AG04450 (cell line): ENCODE measurements at regions of chr6 and their contacts with region 1.

Region 1: GRCh38 chr6:33751771-33752645 is 5.3 kb upstream of the IP6K3 start:
- DNase-seq: no peak
- H3K4me3 ChIP-seq: no peak overlapping the region
- H3K27ac ChIP-seq: no peak overlapping the region
- H3K27me3 ChIP-seq: peaks cover 8% of the 10 kb centered on the region
- CTCF ChIP-seq: no peak

Region 2: DNA sequence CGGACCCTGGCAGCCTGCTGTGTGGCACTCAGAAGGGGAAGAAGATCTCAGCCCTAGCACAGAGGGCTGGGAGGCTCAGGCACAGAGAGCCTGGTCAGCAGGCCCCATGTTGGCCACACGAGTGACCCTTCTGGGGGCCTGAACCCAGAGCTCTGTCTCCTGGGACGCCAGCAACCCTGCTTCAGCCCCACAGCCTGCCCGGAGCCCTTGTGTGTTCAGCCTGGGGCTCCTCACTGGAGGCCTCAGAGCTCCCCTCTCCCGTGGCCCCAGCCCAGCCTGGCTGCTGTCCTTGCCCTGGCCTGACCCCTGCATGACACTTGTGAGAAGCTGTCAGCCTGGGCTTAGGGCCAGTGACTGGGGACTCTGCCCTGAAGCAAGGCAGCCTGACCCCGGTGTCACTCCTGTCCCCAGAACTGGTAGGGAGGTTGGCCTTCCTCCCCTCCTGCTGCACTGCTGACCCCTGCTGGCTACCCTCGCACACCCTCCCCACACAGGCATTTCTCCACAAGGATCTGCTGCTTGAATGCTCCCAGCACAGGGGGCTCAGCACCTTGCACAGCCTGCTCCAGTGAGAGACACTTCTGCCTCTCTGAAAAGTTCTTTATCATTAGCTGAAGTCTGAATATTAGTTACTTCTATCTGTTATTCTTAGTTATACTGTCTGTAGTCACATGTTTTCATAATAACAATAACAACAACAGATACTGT is 10.1 kb after region 1 on chr6:
- CTCF ChIA-PET with region 1: interaction called, 11 read pairs
- POLR2A ChIA-PET with region 1: interaction called, 4 read pairs
- DNase-seq: no peak
- H3K4me3 ChIP-seq: no peak overlapping the region
- H3K27ac ChIP-seq: no peak overlapping the region
- H3K27me3 ChIP-seq: peaks cover 7% of the 10 kb centered on the region
- CTCF ChIP-seq: peak; percentile 60

Region 3: DNA sequence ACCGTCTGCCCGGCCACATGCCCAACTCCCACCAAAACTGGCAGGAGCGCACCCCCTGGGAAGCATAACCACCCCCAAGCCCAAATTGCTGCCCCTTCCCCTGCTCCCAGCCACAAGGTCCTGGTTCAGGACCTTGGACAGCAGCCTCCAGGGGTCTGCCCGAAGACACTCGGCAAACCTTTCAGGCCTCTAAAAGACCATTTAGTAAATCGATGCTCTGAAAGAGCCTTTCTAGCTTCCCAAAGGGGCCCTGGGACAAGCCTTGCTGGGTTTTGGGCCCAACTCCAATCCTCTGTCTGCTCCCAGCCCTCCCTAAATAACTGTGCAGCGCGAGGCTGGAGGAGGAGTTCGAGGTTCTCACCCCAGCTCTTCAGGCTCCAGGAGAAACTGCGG is 363.4 kb after region 1 on chr6:
- CTCF ChIA-PET with region 1: no interaction called
- POLR2A ChIA-PET with region 1: no interaction called
- DNase-seq: no peak
- H3K4me3 ChIP-seq: no peak overlapping the region
- H3K27ac ChIP-seq: no peak overlapping the region
- H3K27me3 ChIP-seq: peaks cover 21% of the 10 kb centered on the region
- CTCF ChIP-seq: no peak

Region 4: DNA sequence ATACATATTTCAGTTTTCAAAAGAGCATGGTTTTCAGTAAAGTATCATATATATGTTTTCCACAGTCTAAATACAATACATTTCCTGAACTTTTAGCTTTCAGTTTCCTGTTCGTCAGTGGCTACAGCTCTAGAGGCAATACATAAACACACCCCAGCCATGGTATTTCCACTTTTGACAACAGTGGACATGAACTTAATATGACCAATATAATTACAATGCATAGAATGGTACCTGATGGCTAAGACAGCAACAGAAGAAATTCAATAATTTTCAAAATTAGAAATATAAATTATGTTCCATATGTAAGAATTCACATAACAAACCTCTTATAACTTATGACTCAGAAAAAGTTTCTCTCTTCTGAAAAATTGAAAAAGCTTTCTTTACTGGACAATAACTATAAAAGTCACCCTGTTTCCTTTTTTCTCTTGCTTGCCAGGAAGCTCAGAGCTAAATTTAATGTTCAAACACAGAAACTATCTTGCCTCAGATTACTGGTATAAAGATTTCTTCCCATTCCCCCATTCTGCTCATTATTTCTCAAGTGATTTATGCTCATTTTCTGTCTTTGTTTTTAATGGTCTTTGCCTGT is 1917.5 kb after region 1 on chr6:
- CTCF ChIA-PET with region 1: no interaction called
- POLR2A ChIA-PET with region 1: interaction called, 10 read pairs
- DNase-seq: no peak
- H3K4me3 ChIP-seq: peak overlapping the region; percentile 17; the same call in 1 of the 2 replicates
- H3K27ac ChIP-seq: no peak overlapping the region
- H3K27me3 ChIP-seq: no peaks in the 10 kb centered on the region
- CTCF ChIP-seq: no peak